Spleen (tissue), 13 donors: ENCODE measurements at regions of chr15 and their contacts with region 1.

Region 1: DNA sequence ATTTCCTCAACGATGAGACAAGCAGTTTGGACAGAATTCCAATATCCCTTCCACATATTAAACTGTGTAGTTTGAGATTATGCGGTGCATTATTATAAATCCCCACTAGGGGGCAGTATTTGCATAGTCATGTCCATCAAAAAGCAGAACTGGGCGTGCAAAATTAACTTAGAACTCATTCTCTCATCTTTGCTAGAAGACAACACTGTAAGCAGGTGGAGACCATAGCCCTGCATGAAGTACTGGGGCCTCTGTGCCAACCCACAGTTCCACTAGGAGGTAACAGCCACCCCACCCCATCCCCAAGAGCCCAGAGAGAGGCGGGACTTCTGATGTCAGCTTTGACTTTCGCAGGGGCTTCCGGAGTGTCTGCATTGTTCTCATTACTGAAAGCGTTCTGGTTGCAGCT is 106.6 kb upstream of the TMC3 start:
- DNase-seq: no peak
- H3K4me3 ChIP-seq: no peak overlapping the region
- H3K27ac ChIP-seq: no peak overlapping the region
- H3K4me1 ChIP-seq: peaks cover 0 to 4% (median 0%) of the 10 kb centered on the region in 6 donors
- H3K27me3 ChIP-seq: no peaks in the 10 kb centered on the region
- CTCF ChIP-seq: peak; percentile 49 to 88 (median 78)
- POLR2A ChIP-seq: no peak

Region 2: GRCh38 chr15:81939604-81940440 is 459.2 kb after region 1 on chr15:
- intact Hi-C with region 1: loop called (anchors 5 kb)
- DNase-seq: no peak
- H3K4me3 ChIP-seq: no peak overlapping the region
- H3K27ac ChIP-seq: no peak overlapping the region
- H3K4me1 ChIP-seq: no peaks in the 10 kb centered on the region
- H3K27me3 ChIP-seq: peaks cover 0 to 3% (median 0%) of the 10 kb centered on the region in 7 donors
- CTCF ChIP-seq: peak; percentile 25 to 72 (median 62)
- POLR2A ChIP-seq: no peak

Region 3: GRCh38 chr15:82139823-82140268 is 659.2 kb after region 1 on chr15:
- intact Hi-C with region 1: loop called (anchors 5 kb)
- DNase-seq: no peak
- H3K4me3 ChIP-seq: no peak overlapping the region
- H3K27ac ChIP-seq: no peak overlapping the region
- H3K4me1 ChIP-seq: peaks cover 0 to 8% (median 0%) of the 10 kb centered on the region in 6 donors
- H3K27me3 ChIP-seq: no peaks in the 10 kb centered on the region
- CTCF ChIP-seq: peak in 9 of 11 experiments; percentile 11 to 73 (median 66)
- POLR2A ChIP-seq: no peak